Body of pancreas (tissue), 4 donors: ENCODE measurements at regions of chr6 and their contacts with region 1.

Region 1: DNA sequence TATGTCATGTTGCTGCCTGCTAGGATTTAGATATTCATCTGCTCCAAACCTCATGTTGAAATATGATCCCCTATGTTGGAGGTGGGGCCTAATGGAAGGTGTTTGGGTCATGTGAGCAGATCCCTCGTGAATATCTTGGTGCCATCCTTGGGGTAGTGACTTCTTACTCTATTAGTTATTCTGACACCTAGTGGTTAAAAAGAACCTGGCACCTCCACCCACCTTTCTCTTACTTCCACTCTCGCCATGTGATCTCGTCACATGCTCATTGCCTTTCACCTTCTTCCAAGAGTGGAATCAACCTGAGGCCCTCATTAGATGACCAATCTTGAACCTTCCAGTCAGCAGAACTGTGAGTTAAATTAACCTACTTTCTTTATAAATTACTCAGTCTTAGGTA is 549.4 kb upstream of the SYNCRIP start:
- DNase-seq: peak; percentile 45 to 62 (median 48)
- ATAC-seq: peak; percentile 87
- H3K4me3 ChIP-seq: no peak overlapping the region
- H3K27ac ChIP-seq: no peak overlapping the region
- H3K4me1 ChIP-seq: no peaks in the 10 kb centered on the region
- H3K27me3 ChIP-seq: no peaks in the 10 kb centered on the region
- CTCF ChIP-seq: peak in 6 of 7 experiments; percentile 41 to 59 (median 52)
- POLR2A ChIP-seq: no peak

Region 2: DNA sequence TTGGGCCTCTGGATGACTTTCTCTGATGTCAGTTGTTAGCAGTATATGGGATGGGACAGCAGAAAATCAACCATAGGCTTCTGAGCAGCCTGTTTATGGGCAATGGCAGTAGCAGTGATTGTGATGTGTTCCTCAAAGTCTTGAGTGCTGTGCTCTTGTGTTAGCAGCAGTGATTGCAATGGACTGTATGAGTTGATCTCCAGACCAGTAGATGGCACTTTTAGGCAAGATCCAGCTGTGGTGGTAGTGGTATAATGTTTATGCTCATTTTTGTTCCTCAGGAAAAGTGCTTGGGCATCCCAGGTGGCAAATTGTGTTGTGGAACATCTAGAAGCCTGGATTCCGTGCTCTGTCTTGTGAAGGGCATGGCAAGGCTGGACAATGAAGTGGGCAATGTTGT is 367.8 kb before region 1 on chr6:
- intact Hi-C with region 1: no loop called
- DNase-seq: no peak
- ATAC-seq: no peak
- H3K4me3 ChIP-seq: no peak overlapping the region
- H3K27ac ChIP-seq: no peak overlapping the region
- H3K4me1 ChIP-seq: no peaks in the 10 kb centered on the region
- H3K27me3 ChIP-seq: no peaks in the 10 kb centered on the region
- CTCF ChIP-seq: peak in 3 of 7 experiments; percentile 15 to 45 (median 19)
- POLR2A ChIP-seq: no peak

Region 3: GRCh38 chr6:85911067-85911466 is 281.1 kb before region 1 on chr6:
- intact Hi-C with region 1: loop called (anchors 10 kb)
- DNase-seq: peak in 1 of 4 donors; percentile 7
- ATAC-seq: no peak
- H3K4me3 ChIP-seq: no peak overlapping the region
- H3K27ac ChIP-seq: no peak overlapping the region
- H3K4me1 ChIP-seq: peaks cover 5% of the 10 kb centered on the region
- H3K27me3 ChIP-seq: no peaks in the 10 kb centered on the region
- CTCF ChIP-seq: no peak
- POLR2A ChIP-seq: no peak